Activated naive CD4-positive, alpha-beta T cell treated with anti-CD3 and anti-CD28 coated beads for 36 hours (primary cell): ENCODE measurements at regions of chr6 and their contacts with region 1.

Region 1: GRCh38 chr6:41051873-41052272 is 1.1 kb upstream of the APOBEC2 start:
- DNase-seq: no peak
- H3K4me3 Mint-ChIP-seq: no peak overlapping the region
- H3K27ac Mint-ChIP-seq: no peak overlapping the region
- H3K4me1 Mint-ChIP-seq: peaks cover 16% of the 10 kb centered on the region
- H3K27me3 Mint-ChIP-seq: no peaks in the 10 kb centered on the region

Region 2: DNA sequence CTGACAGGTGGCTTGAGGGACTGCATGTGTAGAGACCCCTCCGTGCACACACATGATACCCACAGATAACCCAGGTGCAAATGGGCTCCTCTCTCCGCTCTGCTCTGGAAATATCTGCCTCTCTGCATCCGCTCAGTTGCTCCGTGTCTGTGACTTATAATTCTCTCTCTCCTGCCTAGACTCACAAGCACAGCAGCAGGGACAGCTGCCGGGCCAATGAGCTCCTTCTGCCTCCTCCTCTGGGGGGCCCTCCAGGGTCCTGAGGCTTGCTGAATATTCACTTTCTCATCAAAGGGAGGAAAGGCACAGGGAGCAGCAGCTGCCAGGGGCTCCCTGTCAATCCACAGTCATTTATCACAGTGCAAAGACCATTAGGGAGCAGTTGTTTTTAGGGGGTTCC is 488.8 kb before region 1 on chr6:
- CTCF ChIA-PET with region 1: no interaction called
- intact Hi-C with region 1: no loop called
- DNase-seq: no peak
- H3K4me3 Mint-ChIP-seq: no peak overlapping the region
- H3K27ac Mint-ChIP-seq: no peak overlapping the region
- H3K4me1 Mint-ChIP-seq: no peaks in the 10 kb centered on the region
- H3K27me3 Mint-ChIP-seq: no peaks in the 10 kb centered on the region

Region 3: GRCh38 chr6:41039060-41039998 is 12.5 kb before region 1 on chr6 and contains the start of gene UNC5CL:
- CTCF ChIA-PET with region 1: interaction called, 17 read pairs
- intact Hi-C with region 1: no loop called
- DNase-seq: peak; percentile 76
- H3K4me3 Mint-ChIP-seq: no peak within 1 kb of the TSS
- H3K27ac Mint-ChIP-seq: no peak within 1 kb of the TSS
- H3K4me1 Mint-ChIP-seq: peaks cover 3% of the 10 kb centered on the region
- H3K27me3 Mint-ChIP-seq: no peaks in the 10 kb centered on the region
- total RNA-seq, gene UNC5CL: 2.3 to 3.0 TPM

Region 4: DNA sequence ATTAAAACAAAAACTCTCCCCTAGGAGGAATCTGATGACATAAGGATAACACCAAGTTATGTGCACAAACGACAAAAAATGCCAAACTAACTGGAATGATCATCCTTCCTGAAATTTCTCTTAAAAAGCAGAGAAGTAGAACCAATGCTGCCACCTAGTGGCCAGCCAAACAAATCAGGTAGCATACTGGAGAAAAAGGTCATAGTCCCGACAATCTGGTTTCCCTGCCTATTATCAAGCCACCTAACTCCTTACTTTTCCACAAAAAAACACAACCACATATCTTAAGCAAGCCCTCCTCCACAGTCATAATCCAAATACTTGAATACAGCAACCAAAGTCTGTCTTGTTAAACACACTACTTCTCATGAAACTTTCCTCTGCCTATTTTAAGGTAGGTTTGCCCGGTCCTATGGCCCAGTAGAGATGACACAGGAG is 15.0 kb after region 1 on chr6:
- CTCF ChIA-PET with region 1: interaction called, 12 read pairs
- intact Hi-C with region 1: no loop called
- DNase-seq: peak; percentile 78
- H3K4me3 Mint-ChIP-seq: no peak overlapping the region
- H3K27ac Mint-ChIP-seq: no peak overlapping the region
- H3K4me1 Mint-ChIP-seq: peaks cover 35% of the 10 kb centered on the region
- H3K27me3 Mint-ChIP-seq: no peaks in the 10 kb centered on the region